ENCODE measurements at regions of chr4 and their contacts with region 1.

Region 1: GRCh38 chr4:674172-675035 is at the starts of genes ATP5ME and MYL5:
- DNase-seq: peak; percentile 99
- H3K4me3 Mint-ChIP-seq: peak within 1 kb of the TSS; percentile 88
- H3K27ac Mint-ChIP-seq: peak within 1 kb of the TSS; percentile 91
- H3K4me1 Mint-ChIP-seq: peaks cover 8% of the 10 kb centered on the region
- H3K27me3 Mint-ChIP-seq: no peaks in the 10 kb centered on the region
- total RNA-seq, gene ATP5ME: 232 TPM in 2 replicates
- total RNA-seq, gene MYL5: 23.4 and 24.7 TPM in 2 replicates

Region 2: DNA sequence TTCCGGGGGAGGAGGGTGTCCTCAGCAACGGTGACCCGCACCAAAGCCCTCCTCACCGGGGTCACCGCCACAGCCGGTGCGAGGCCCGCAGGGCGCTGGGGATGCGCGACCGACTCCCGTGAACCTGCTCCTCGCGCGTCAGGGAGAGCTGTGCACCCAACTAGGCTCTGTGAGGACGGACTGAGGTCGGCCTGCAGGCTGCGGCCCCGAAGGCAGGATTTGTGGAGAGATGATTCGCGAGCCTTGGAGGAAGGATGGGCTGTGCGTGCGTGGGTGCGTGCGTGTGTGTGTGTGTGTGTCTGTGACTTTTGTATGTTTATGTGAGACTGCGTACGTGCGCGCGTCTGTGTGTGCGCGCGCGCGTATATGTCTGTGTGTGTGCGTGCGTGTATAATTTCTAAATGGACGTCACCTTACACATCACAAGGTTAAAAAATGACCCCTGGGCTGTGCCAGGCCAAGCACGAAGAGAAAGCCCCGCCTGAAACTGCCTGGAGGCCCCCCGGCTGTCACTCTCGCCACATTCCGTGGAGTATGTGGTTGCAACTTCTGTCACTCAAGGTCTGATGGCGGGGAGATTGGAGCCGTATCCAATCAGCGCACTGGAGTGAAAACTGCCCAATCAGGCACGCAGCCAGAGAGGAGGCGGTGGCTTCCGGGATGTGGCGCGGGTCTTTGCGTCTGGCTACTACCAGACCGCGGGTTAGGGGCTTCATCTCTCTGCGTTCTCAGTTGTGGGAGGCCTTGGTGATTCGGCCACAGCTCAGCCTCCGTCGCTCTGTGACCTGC is 337.1 kb before region 1 on chr4 and contains the start of gene ZNF141:
- intact Hi-C with region 1: loop called (anchors 1 kb)
- DNase-seq: peak; percentile 97
- H3K4me3 Mint-ChIP-seq: peak within 1 kb of the TSS; percentile 99
- H3K27ac Mint-ChIP-seq: peak within 1 kb of the TSS; percentile 100
- H3K4me1 Mint-ChIP-seq: peaks cover 14% of the 10 kb centered on the region
- H3K27me3 Mint-ChIP-seq: peaks cover 2% of the 10 kb centered on the region
- total RNA-seq, gene ZNF141: 25.4 and 27.0 TPM in 2 replicates

Region 3: GRCh38 chr4:499577-499976 is 174.8 kb before region 1 on chr4:
- intact Hi-C with region 1: loop called (anchors 1 kb)
- DNase-seq: peak; percentile 69
- H3K4me3 Mint-ChIP-seq: peak overlapping the region; percentile 93
- H3K27ac Mint-ChIP-seq: peak overlapping the region; percentile 96
- H3K4me1 Mint-ChIP-seq: peaks cover 25% of the 10 kb centered on the region
- H3K27me3 Mint-ChIP-seq: no peaks in the 10 kb centered on the region

Region 4: GRCh38 chr4:608236-608635 is 66.2 kb before region 1 on chr4:
- intact Hi-C with region 1: no loop called
- DNase-seq: no peak
- H3K4me3 Mint-ChIP-seq: no peak overlapping the region
- H3K27ac Mint-ChIP-seq: no peak overlapping the region
- H3K4me1 Mint-ChIP-seq: peaks cover 2% of the 10 kb centered on the region
- H3K27me3 Mint-ChIP-seq: peaks cover 3% of the 10 kb centered on the region

Region 5: DNA sequence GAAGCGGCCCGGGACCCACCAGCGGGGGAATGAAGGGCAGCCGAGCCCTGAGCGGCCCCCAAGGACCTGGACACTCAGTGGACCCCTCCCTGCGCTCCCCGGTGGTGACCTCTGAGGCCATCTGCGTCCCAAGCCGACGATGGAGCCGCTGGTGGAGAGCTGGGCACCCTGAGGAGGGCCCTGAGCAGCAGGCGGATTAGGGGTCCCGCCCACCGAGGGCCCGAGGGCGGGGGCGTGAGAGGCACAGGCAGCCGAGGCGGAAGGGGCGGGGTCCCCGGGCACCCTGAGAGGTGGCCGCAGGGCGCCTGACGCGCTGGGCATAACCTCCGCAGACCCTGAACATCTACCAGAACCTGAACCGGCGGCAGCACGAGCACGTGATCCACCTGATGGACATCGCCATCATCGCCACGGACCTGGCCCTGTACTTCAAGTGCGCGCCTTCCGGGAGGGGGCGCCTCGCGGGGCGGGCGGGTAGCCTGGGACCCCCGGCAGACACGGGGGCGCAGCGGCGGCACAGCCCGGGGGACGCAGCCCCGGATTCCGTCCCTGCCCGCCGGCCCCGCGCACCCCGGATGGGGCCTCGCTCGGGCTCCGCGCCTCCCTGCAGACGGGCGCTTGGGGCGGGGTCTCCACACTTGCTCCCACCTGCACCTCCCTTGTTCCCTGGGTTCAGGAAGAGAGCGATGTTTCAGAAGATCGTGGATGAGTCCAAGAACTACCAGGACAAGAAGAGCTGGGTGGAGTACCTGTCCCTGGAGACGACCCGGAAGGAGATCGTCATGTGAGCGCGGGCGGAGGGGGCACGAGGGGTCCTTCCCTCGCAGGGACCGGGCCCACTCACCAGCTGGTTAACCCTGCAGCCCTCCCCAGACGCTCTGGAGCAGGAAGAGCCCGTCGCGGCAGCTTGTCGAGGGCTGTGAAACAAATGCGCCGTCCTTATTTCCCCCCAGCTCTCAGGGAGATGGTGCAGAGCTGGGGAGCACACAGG is 10.7 kb before region 1 on chr4:
- intact Hi-C with region 1: loop called (anchors 1 kb)
- DNase-seq: peak; percentile 93
- H3K4me3 Mint-ChIP-seq: peak overlapping the region; percentile 84
- H3K27ac Mint-ChIP-seq: peak overlapping the region; percentile 84
- H3K4me1 Mint-ChIP-seq: peaks cover 6% of the 10 kb centered on the region
- H3K27me3 Mint-ChIP-seq: no peaks in the 10 kb centered on the region

Region 6: DNA sequence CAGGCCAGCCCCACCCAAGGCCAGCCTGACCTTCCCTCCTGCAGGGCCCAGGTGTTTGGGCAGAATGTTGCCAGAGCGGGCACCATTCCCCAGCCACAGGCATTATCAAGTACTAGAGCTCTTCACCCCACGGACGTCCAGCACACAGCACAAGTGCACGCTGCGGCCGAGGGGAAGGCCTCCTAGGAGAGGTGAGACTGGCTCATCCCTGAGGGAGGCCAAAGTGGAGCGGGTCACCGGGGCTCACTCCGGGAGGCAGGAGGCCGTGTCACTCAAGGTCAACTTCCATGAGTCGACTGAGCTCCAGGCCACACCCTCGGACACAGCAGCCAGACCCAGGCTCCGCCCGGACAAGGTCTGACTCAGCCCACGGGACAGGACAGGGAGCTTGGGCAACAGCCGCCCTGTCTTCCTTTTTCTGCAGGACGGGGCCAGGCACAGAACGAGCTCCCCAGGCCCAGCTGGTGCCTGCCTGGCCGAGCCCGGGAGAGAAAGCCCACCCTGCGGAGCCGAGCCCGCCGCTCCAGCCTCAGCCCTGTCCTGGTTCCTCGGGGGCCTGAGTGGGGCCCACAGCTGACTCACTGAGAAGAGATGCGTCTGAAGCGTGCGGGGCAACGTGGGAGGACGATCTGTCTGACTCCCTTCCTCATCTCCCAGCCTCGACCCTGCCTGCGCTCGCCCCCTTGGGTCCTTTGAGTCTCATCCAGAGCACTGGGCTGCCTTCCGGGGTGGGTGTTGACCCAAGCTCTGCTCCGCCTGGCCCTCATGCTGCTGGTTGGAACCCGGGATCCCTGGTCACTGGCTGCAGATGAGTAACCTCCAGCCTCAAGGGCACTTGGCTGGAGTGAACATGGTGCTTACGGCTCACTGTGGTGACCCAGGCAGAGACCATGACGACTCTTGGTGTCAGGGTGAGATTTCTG is 12.9 kb after region 1 on chr4:
- intact Hi-C with region 1: no loop called
- DNase-seq: no peak
- H3K4me3 Mint-ChIP-seq: no peak overlapping the region
- H3K27ac Mint-ChIP-seq: no peak overlapping the region
- H3K4me1 Mint-ChIP-seq: peaks cover 4% of the 10 kb centered on the region
- H3K27me3 Mint-ChIP-seq: peaks cover 15% of the 10 kb centered on the region

Region 7: GRCh38 chr4:749698-750666 is 75.6 kb after region 1 on chr4:
- intact Hi-C with region 1: no loop called
- DNase-seq: no peak
- H3K4me3 Mint-ChIP-seq: no peak overlapping the region
- H3K27ac Mint-ChIP-seq: no peak overlapping the region
- H3K4me1 Mint-ChIP-seq: peaks cover 3% of the 10 kb centered on the region
- H3K27me3 Mint-ChIP-seq: no peaks in the 10 kb centered on the region

Region 8: GRCh38 chr4:781493-782216 is 107.3 kb after region 1 on chr4:
- intact Hi-C with region 1: loop called (anchors 5 kb)
- DNase-seq: peak; percentile 100
- H3K4me3 Mint-ChIP-seq: peak overlapping the region; percentile 88
- H3K27ac Mint-ChIP-seq: peak overlapping the region; percentile 95
- H3K4me1 Mint-ChIP-seq: peaks cover 41% of the 10 kb centered on the region
- H3K27me3 Mint-ChIP-seq: peaks cover 15% of the 10 kb centered on the region

Region 9: GRCh38 chr4:986879-987623 is 312.6 kb after region 1 on chr4 and contains the start of gene IDUA:
- intact Hi-C with region 1: loop called (anchors 5 kb)
- DNase-seq: peak; percentile 96
- H3K4me3 Mint-ChIP-seq: peak within 1 kb of the TSS; percentile 86
- H3K27ac Mint-ChIP-seq: peak within 1 kb of the TSS; percentile 87
- H3K4me1 Mint-ChIP-seq: peaks cover 15% of the 10 kb centered on the region
- H3K27me3 Mint-ChIP-seq: no peaks in the 10 kb centered on the region
- total RNA-seq, gene IDUA: 30.4 and 31.2 TPM in 2 replicates

Region 10: GRCh38 chr4:1492651-1493537 is 818.5 kb after region 1 on chr4:
- intact Hi-C with region 1: no loop called
- DNase-seq: no peak
- H3K4me3 Mint-ChIP-seq: no peak overlapping the region
- H3K27ac Mint-ChIP-seq: no peak overlapping the region
- H3K4me1 Mint-ChIP-seq: no peaks in the 10 kb centered on the region
- H3K27me3 Mint-ChIP-seq: no peaks in the 10 kb centered on the region

Measured in activated CD4-positive, alpha-beta T cell treated with anti-CD3 and anti-CD28 coated beads, Interleukin-2, amount 10 ng/mL, durations not matched to agents 24 days and 14 days (primary cell).